A673 (cell line): ENCODE measurements at regions of chr17 and their contacts with region 1.

Region 1: GRCh38 chr17:17972126-17972951 is at the starts of genes DRC3 and TOM1L2:
- DNase-seq: peak; percentile 100
- H3K4me3 ChIP-seq: peak within 1 kb of the TSS; percentile 60
- H3K27ac ChIP-seq: peak within 1 kb of the TSS; percentile 35
- H3K4me1 ChIP-seq: peaks cover 12% of the 10 kb centered on the region
- H3K27me3 ChIP-seq: no peaks in the 10 kb centered on the region
- CTCF ChIP-seq: no peak
- total RNA-seq, gene DRC3: 1.0 and 2.0 TPM in 2 replicates
- total RNA-seq, gene TOM1L2: 10.0 and 15.2 TPM in 2 replicates

Region 2: GRCh38 chr17:17739388-17740066 is 232.8 kb before region 1 on chr17:
- CTCF ChIA-PET with region 1: no interaction called
- POLR2A ChIA-PET with region 1: no interaction called
- intact Hi-C with region 1: no loop called
- DNase-seq: peak; percentile 37
- H3K4me3 ChIP-seq: no peak overlapping the region
- H3K27ac ChIP-seq: no peak overlapping the region
- H3K4me1 ChIP-seq: peaks cover 29% of the 10 kb centered on the region
- H3K27me3 ChIP-seq: no peaks in the 10 kb centered on the region
- CTCF ChIP-seq: no peak

Region 3: DNA sequence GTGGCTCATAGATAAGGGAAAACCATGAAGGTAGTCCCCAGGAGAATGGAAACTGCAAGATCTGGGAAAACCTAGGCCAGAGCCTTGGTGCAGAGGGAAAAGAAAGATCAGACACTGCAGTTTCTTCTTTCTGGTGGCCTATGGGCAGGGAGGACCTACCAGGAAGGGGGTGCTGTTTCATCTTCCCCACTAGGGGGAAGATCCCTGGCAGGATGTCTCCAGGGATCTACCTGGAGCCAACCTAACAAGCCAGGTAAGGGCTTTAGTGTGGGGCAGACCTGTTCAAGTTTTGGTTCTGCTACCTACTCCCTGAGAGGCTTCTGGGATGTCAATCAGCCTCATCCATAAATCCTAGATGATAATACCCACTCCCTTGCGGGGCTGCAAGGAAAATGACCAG is 21.5 kb before region 1 on chr17:
- CTCF ChIA-PET with region 1: no interaction called
- POLR2A ChIA-PET with region 1: no interaction called
- intact Hi-C with region 1: no loop called
- DNase-seq: no peak
- H3K4me3 ChIP-seq: no peak overlapping the region
- H3K27ac ChIP-seq: no peak overlapping the region
- H3K4me1 ChIP-seq: peaks cover 3% of the 10 kb centered on the region
- H3K27me3 ChIP-seq: no peaks in the 10 kb centered on the region
- CTCF ChIP-seq: 0 out of 2 replicates have a peak, but pooled peaks have one; percentile 17

Region 4: DNA sequence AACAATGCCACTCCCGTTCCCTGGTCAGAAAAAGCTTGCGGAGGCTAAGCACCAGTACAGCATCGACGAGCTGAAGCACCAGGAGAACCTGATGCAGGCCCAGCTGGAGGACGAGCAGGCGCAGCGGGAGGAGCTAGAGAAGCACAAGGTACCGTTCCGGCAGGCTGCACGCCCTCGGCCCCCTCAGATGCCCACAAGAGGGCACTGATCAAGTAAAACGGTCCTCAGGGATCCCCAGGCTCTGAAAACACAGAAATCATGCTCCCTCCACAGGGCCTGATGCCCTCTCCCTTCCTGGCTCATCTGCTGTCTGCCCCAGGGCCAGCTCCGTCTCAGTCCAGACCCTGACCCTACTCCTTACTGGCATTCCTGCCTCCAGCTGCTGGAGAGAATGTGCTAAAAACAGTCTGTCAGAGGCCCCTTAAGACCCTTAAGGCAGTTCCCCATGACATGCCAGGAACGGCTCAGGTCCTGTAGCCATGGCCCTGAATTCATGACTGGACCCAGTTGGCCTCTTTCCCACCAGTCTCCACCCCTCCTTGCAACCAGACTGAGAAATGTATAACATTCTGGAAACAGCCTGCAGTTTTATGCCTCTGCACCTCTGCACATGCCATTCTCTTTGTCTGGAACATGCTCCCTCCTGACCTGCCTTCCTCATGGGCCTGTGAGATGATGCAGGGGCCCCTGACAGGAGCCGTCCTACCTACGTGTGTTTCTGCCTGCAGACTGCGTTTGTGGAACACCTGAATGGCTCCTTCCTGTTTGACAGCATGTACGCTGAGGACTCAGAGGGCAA is 22.1 kb after region 1 on chr17:
- CTCF ChIA-PET with region 1: no interaction called
- POLR2A ChIA-PET with region 1: interaction called, 11 read pairs
- intact Hi-C with region 1: no loop called
- DNase-seq: peak; percentile 38
- H3K4me3 ChIP-seq: no peak overlapping the region
- H3K27ac ChIP-seq: no peak overlapping the region
- H3K4me1 ChIP-seq: no peaks in the 10 kb centered on the region
- H3K27me3 ChIP-seq: no peaks in the 10 kb centered on the region
- CTCF ChIP-seq: peak; percentile 47